T-cell (primary cell): ENCODE measurements at regions of chr3 and their contacts with region 1.

Region 1: DNA sequence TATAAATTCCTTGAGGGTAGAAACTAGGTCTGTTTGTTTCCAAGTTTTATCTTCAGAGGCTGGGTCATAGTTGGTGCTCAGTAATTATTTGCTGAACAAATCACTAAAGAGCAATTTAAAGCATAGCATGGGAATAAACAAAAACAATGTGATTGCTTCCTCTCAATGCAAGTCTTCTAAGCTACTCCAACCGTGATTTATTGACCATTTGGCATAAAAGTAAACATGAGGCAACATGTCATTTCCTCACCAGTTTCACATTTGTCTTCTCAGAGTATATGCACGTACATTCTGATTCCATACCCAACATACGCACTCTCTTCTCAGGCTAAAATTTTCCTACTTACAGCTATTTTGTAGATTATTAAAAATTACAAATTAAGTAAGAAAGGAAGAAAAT is 782.3 kb downstream of the NAALADL2 start:
- DNase-seq: no peak
- ATAC-seq: no peak
- H3K4me3 ChIP-seq: no peak overlapping the region
- H3K4me3 Mint-ChIP-seq: no peak overlapping the region
- H3K27ac ChIP-seq: no peak overlapping the region
- H3K27ac Mint-ChIP-seq: no peak overlapping the region
- H3K4me1 ChIP-seq: no peaks in the 10 kb centered on the region
- H3K4me1 Mint-ChIP-seq: no peaks in the 10 kb centered on the region
- H3K27me3 ChIP-seq: no peaks in the 10 kb centered on the region
- H3K27me3 Mint-ChIP-seq: no peaks in the 10 kb centered on the region

Region 2: GRCh38 chr3:175121225-175121624 is 520.2 kb before region 1 on chr3:
- CTCF ChIA-PET with region 1: no interaction called
- POLR2A ChIA-PET with region 1: no interaction called
- DNase-seq: no peak
- ATAC-seq: no peak
- H3K4me3 ChIP-seq: no peak overlapping the region
- H3K4me3 Mint-ChIP-seq: no peak overlapping the region
- H3K27ac ChIP-seq: no peak overlapping the region
- H3K27ac Mint-ChIP-seq: no peak overlapping the region
- H3K4me1 ChIP-seq: no peaks in the 10 kb centered on the region
- H3K4me1 Mint-ChIP-seq: no peaks in the 10 kb centered on the region
- H3K27me3 ChIP-seq: no peaks in the 10 kb centered on the region
- H3K27me3 Mint-ChIP-seq: no peaks in the 10 kb centered on the region

Region 3: DNA sequence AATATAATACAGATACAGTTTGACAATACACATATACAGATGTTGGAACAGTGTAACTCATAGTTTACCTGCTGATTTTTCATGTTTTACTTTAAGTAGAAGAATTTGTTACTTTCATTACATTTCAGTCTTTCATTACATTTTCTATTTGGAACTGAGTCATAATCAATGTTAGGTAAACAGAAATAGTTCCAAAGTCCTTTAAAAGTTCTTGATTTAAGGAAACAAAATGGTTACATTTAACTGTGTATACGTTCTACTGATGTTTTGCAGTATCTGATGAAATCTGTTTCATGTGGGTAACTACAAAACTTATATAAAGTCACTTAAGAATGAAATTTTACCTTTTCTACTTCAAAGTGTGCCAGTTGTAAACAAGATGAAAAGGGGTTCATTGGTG is 61.1 kb before region 1 on chr3:
- CTCF ChIA-PET with region 1: no interaction called
- POLR2A ChIA-PET with region 1: interaction called in 1 of 2 experiments, 12 read pairs
- DNase-seq: no peak
- ATAC-seq: no peak
- H3K4me3 ChIP-seq: no peak overlapping the region
- H3K4me3 Mint-ChIP-seq: no peak overlapping the region
- H3K27ac ChIP-seq: no peak overlapping the region
- H3K27ac Mint-ChIP-seq: no peak overlapping the region
- H3K4me1 ChIP-seq: no peaks in the 10 kb centered on the region
- H3K4me1 Mint-ChIP-seq: no peaks in the 10 kb centered on the region
- H3K27me3 ChIP-seq: no peaks in the 10 kb centered on the region
- H3K27me3 Mint-ChIP-seq: no peaks in the 10 kb centered on the region